CD8-positive, alpha-beta T cell (primary cell): ENCODE measurements at regions of chr10 and their contacts with region 1.

Region 1: GRCh38 chr10:73810735-73811465 is 498 bp downstream of the NDST2 start:
- DNase-seq: peak; percentile 19 to 79 (median 66)
- ATAC-seq: peak; percentile 12
- H3K4me3 ChIP-seq: peak overlapping the region; percentile 56 to 87
- H3K4me3 Mint-ChIP-seq: peak overlapping the region; percentile 89
- H3K27ac ChIP-seq: peak overlapping the region; percentile 71 to 91
- H3K27ac Mint-ChIP-seq: peak overlapping the region; percentile 95
- H3K4me1 ChIP-seq: peaks cover 48% of the 10 kb centered on the region
- H3K4me1 Mint-ChIP-seq: peaks cover 44% of the 10 kb centered on the region
- H3K27me3 ChIP-seq: no peaks in the 10 kb centered on the region
- H3K27me3 Mint-ChIP-seq: no peaks in the 10 kb centered on the region
- CTCF ChIP-seq: no peak

Region 2: DNA sequence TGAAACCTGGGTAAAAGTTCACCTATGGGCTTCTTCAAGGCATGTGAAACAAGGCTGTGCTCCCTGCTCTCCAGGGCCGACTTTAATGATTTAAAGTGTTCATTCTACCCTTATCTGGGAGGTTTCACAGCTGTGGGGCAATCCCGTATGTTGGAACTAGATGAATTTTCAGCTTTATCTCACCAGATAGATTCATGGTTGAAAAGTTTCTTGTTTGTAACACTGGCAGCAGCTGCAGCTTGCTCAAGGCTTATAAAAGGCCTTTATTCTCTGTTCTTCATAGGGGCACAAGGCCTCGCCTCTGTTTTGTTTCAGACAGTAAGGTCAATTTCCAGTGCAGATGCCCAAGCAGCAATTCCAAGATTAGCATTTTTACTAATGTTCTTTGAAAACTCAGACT is 1385.8 kb before region 1 on chr10:
- CTCF ChIA-PET with region 1: no interaction called
- POLR2A ChIA-PET with region 1: no interaction called
- intact Hi-C with region 1: no loop called
- DNase-seq: no peak
- ATAC-seq: no peak
- H3K4me3 ChIP-seq: no peak overlapping the region
- H3K4me3 Mint-ChIP-seq: no peak overlapping the region
- H3K27ac ChIP-seq: no peak overlapping the region
- H3K27ac Mint-ChIP-seq: no peak overlapping the region
- H3K4me1 ChIP-seq: no peaks in the 10 kb centered on the region
- H3K4me1 Mint-ChIP-seq: no peaks in the 10 kb centered on the region
- H3K27me3 ChIP-seq: no peaks in the 10 kb centered on the region
- H3K27me3 Mint-ChIP-seq: no peaks in the 10 kb centered on the region
- CTCF ChIP-seq: no peak

Region 3: GRCh38 chr10:73099141-73099540 is 711.8 kb before region 1 on chr10:
- CTCF ChIA-PET with region 1: no interaction called
- POLR2A ChIA-PET with region 1: no interaction called
- intact Hi-C with region 1: no loop called
- DNase-seq: no peak
- ATAC-seq: no peak
- H3K4me3 ChIP-seq: no peak overlapping the region
- H3K4me3 Mint-ChIP-seq: no peak overlapping the region
- H3K27ac ChIP-seq: no peak overlapping the region
- H3K27ac Mint-ChIP-seq: no peak overlapping the region
- H3K4me1 ChIP-seq: peaks cover 15% of the 10 kb centered on the region
- H3K4me1 Mint-ChIP-seq: peaks cover 22% of the 10 kb centered on the region
- H3K27me3 ChIP-seq: no peaks in the 10 kb centered on the region
- H3K27me3 Mint-ChIP-seq: no peaks in the 10 kb centered on the region
- CTCF ChIP-seq: no peak

Region 4: DNA sequence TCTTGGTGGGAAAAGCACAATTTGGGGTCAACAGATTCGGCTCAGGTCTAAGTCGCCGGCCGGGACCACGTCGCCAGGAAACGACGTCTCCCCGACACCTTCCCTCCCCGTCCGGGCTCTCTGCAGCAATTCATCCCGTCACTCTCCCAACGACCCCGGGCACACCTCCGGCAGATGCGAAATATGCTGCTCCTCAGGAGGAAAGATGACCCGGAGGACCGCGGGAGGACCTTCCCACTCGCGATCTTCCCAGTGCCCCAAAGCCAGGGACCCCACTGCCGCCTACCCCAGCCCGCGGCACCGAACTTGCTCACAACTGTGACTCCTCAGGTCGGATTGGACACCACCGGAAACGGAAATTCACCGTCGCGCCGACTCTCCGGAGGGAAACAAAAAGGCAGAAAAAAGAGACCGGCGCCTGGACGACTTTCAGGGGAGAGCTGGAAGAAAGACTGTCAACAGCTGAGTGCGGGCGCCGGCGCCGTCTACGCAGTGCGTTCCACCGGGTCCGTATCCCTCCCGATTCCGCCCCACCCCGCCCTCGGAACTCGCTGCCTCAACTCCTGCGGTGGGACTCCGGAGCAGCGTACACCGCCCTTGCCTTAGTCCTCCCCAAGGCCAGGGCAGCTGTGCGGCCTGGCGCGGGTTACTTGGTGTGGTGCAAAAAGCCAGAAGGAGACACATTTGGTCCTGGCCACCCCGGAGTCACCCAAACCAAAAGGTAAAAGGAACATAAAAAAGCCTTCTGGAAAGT is 80.6 kb before region 1 on chr10:
- CTCF ChIA-PET with region 1: no interaction called
- POLR2A ChIA-PET with region 1: interaction called, 7 read pairs
- intact Hi-C with region 1: loop called in 1 of 2 experiments (anchors 1 kb)
- DNase-seq: peak; percentile 86 to 95 (median 89)
- ATAC-seq: peak; percentile 89
- H3K4me3 ChIP-seq: peak overlapping the region; percentile 98 to 100
- H3K4me3 Mint-ChIP-seq: peak overlapping the region; percentile 100
- H3K27ac ChIP-seq: peak overlapping the region; percentile 87 to 91
- H3K27ac Mint-ChIP-seq: peak overlapping the region; percentile 99
- H3K4me1 ChIP-seq: peaks cover 13% of the 10 kb centered on the region
- H3K4me1 Mint-ChIP-seq: peaks cover 29% of the 10 kb centered on the region
- H3K27me3 ChIP-seq: no peaks in the 10 kb centered on the region
- H3K27me3 Mint-ChIP-seq: no peaks in the 10 kb centered on the region
- CTCF ChIP-seq: no peak